ENCODE measurements at regions of chr20 and their contacts with region 1.

Region 1: DNA sequence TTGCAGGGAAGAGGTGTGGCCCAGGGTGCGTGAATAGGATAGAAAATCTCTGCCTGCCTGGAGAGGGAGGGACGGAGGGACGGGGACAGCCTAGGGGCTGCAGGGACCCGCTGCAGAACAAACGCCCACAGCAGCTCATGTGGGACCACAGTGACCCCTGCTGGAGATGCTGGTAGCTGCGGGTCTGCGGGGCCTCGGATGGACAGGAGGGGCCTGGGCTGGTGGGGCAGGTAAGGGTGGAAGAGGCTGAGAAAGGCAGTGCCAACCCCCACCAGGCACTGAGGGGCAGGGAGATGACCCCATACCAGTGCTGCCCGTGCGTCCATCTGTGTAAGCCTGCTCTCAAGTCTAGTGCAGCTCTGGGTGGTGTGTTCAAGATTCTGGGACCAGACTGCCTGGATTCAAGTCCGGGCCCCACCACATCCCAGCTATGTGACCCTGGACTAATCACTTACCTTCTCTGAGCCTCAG is 39.4 kb downstream of the KIAA1755 start:
- DNase-seq: no peak
- H3K4me3 ChIP-seq: no peak overlapping the region
- H3K27ac ChIP-seq: no peak overlapping the region
- H3K4me1 ChIP-seq: peaks cover 14% of the 10 kb centered on the region
- H3K27me3 ChIP-seq: no peaks in the 10 kb centered on the region
- CTCF ChIP-seq: peak; percentile 66 to 93 (median 90)
- POLR2A ChIP-seq: no peak

Region 2: DNA sequence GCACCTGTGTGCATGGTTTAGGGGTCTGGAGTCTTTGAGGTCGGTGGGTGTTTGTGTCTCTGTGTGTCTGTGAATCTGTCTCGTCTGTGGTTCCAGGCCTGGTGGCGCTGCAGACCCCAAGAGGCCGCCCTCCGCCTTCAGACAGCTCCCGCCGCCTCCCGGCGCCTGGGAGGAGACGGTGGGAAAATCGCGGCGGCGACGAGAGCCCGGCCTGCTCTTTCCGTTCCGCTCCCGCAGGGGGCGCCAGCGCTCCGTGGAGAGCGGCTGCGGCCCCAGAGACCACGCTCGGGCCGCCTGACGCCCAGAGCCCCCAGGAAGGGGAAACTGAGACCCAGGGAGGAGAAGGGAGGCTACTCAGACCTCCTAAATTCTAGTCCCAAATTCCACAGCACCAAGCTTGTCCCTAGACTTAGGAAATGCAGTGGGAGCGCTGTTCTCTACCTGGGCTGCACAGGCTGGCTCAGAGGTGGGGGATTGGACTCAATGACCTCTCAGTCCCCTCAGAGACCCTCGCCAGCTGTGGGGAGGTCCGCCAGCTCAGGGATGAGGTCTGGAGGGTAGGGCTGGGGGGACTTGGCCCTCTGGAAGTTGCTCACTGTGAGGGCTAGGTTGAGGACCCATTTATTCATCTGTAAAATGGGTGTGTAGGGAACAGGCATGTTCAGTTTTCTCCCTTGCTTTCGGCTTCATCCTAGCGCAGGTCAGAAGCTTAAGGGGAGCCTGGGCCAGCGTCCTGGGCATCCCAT is 656.6 kb before region 1 on chr20:
- intact Hi-C with region 1: loop called (anchors 10 kb)
- DNase-seq: peak; percentile 52 to 72
- H3K4me3 ChIP-seq: no peak overlapping the region
- H3K27ac ChIP-seq: no peak overlapping the region
- H3K4me1 ChIP-seq: peaks cover 4% of the 10 kb centered on the region
- H3K27me3 ChIP-seq: no peaks in the 10 kb centered on the region
- CTCF ChIP-seq: peak; percentile 37 to 58 (median 52)
- POLR2A ChIP-seq: no peak

Region 3: GRCh38 chr20:38057351-38057972 is 163.7 kb before region 1 on chr20:
- intact Hi-C with region 1: loop called (anchors 5 kb)
- DNase-seq: peak in 1 of 2 donors; percentile 82
- H3K4me3 ChIP-seq: no peak overlapping the region
- H3K27ac ChIP-seq: no peak overlapping the region
- H3K4me1 ChIP-seq: no peaks in the 10 kb centered on the region
- H3K27me3 ChIP-seq: no peaks in the 10 kb centered on the region
- CTCF ChIP-seq: peak; percentile 76 to 89 (median 88)
- POLR2A ChIP-seq: no peak

Region 4: DNA sequence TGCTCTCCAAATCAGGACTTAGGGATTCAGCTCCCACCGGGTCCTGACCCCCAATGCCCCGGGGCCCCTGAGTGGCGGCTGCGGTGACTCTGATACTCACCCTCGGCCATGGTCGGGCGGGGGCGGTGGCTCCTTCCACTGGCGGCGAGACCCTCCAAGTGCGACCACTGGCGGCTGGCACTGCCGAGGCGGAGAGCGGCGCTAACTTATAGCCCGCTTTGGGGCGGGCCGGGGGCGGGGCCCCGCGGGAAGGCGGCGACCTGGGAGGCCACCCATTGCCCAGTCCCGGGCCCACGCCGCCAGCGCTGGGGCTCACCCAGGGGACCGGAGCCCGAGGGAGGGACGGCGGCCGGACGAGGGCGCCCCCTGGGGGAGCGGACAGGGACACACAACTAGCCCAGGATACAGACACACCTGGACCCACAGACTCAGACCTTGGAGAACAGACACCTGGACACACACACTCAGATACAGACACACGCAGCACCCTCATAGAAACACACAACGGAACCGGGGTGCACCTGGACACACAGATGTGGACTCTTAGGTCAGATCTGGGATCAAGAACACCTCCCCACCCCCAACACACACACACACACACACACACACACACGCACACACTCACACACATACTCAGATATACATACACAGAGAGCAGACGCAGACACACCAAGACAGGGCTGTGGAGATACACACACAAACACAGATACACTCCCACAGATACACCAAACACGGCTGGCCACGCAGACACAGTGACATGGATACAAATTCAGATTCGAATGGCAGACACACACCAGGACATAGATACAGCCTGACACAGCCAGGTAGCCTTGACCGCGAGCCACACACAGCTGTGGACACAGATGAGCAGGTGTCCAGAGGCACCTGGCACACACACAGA is 55.8 kb before region 1 on chr20 and contains the start of gene TGM2:
- intact Hi-C with region 1: loop called (anchors 5 kb)
- DNase-seq: no peak
- H3K4me3 ChIP-seq: peak within 1 kb of the TSS; percentile 54 to 62
- H3K27ac ChIP-seq: peak within 1 kb of the TSS; percentile 78
- H3K4me1 ChIP-seq: peaks cover 67% of the 10 kb centered on the region
- H3K27me3 ChIP-seq: no peaks in the 10 kb centered on the region
- CTCF ChIP-seq: peak; percentile 39 to 88 (median 65)
- POLR2A ChIP-seq: no peak
- total RNA-seq, gene TGM2: 92.8 TPM

Region 5: DNA sequence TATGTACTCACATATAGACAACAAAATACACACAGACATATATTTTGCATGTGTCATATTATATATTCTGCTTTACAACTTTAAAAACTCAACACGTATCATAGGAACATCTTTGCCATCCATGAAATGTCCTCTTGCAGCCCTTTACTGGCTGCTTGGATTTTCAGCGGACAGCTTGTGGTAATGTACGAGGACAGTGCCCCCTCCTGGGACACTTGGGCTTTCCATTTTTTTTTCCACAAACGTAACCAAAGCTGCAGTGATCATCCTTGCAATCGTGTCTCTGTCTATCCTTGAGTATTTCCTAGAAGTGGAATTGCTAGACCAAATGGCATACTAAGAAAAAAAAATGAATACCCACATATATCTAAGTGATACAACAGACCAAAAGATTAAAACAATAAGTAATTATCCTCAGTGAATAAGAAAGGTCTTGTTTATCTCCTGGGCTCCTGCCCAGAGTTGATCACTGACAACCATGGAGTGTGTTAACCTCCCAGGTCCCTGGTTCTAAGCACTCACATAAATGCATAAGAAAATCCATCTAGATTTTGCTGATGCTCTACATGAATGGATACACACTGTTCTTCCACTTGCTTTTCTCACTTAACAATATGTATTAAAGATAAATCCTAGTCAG is 100.9 kb after region 1 on chr20:
- intact Hi-C with region 1: loop called (anchors 5 kb)
- DNase-seq: no peak
- H3K4me3 ChIP-seq: no peak overlapping the region
- H3K27ac ChIP-seq: no peak overlapping the region
- H3K4me1 ChIP-seq: no peaks in the 10 kb centered on the region
- H3K27me3 ChIP-seq: no peaks in the 10 kb centered on the region
- CTCF ChIP-seq: peak in 2 of 3 experiments; percentile 62 to 67
- POLR2A ChIP-seq: no peak

Measured in vagina (tissue), 2 donors.